ENCODE measurements at regions of chr19 and their contacts with region 1.

Region 1: DNA sequence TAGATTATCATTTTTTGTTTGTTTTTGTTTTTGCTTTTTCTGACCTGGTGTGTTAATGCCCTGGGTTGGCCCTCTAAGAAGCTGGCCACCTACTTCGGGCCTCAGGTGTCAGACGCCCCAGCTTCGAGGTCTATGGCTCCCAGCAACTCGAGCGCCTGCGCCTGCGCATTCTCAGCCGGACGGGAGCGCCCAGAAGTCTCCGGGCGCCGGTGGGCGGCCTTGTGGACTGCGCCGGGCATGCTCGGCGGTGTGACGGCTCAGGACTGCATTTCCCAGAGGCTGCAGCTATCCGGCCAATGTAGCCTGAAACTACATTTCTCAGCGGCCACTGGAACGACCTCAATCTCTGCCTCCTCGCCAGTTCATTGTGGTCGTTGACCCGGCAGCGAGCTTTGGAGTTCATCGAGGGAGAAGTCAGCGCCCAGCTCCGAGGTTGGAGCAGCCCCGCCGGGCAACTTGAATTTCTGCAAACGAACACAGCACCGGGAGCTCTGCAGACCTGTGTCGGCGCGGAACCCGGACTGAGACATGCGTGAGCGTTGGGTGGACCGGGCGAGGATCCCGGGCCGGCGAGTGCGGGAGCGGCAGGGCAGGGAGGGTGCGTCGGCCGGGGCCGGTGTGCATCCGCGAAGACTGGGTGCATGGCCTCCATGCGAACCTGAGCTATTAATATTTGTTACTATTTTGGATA is at the start of gene ZNF30:
- DNase-seq: peak; percentile 93
- H3K4me3 Mint-ChIP-seq: peak within 1 kb of the TSS; percentile 99
- H3K27ac Mint-ChIP-seq: peak within 1 kb of the TSS; percentile 79
- H3K4me1 Mint-ChIP-seq: no peaks in the 10 kb centered on the region
- H3K27me3 Mint-ChIP-seq: peaks cover 14% of the 10 kb centered on the region
- CTCF ChIP-seq: no peak
- total RNA-seq, gene ZNF30: 2.9 and 4.2 TPM in 2 replicates

Region 2: DNA sequence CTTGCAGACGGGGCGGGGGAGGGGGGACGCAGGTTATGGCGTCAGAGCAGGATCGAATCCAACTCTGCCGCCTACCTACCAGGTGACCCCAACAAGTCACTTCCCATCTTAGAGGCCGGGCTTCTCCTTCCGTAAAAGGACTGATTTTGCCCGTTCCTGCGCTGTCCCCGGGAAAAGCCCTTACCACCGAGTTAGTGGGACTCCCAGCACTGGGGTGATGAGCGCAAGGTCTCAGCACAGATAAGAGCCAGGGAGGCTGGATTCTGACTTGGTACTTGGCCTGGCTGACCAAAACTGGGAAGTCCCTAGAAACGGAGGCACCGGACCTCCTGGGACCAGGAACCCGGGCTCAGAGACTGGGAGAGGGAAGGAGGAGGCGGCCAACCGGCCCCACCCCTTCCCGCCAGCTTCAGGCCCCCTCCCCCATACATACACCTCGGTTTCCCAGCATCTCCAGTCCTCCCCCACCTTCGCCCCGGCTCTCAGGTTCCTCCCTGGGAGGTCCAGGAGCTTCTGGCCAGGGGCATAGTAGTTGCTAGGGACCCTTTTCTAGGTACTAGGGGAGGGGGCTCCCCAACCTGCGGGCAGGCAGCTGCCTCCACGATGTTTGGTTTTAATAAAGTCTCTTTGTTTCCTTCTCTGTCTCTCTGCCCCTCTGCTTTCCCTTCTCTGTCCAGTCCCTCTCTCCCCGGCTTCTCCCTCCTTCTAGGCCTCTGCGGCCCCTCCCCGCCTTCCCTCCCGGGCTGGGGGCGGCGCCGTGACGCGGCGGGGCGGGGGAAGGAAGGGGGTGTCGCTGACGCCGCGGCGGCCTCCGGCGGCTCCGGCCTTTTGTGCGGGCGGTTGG is 72.9 kb after region 1 on chr19 and contains the start of gene GRAMD1A:
- CTCF ChIA-PET with region 1: no interaction called
- intact Hi-C with region 1: loop called (anchors 10 kb)
- DNase-seq: peak; percentile 95
- H3K4me3 Mint-ChIP-seq: peak within 1 kb of the TSS; percentile 88
- H3K27ac Mint-ChIP-seq: peak within 1 kb of the TSS; percentile 88
- H3K4me1 Mint-ChIP-seq: peaks cover 67% of the 10 kb centered on the region
- H3K27me3 Mint-ChIP-seq: no peaks in the 10 kb centered on the region
- CTCF ChIP-seq: no peak
- total RNA-seq, gene GRAMD1A: 114 and 126 TPM in 2 replicates